Caco-2 (cell line): ENCODE measurements at regions of chr6 and their contacts with region 1.

Region 1: DNA sequence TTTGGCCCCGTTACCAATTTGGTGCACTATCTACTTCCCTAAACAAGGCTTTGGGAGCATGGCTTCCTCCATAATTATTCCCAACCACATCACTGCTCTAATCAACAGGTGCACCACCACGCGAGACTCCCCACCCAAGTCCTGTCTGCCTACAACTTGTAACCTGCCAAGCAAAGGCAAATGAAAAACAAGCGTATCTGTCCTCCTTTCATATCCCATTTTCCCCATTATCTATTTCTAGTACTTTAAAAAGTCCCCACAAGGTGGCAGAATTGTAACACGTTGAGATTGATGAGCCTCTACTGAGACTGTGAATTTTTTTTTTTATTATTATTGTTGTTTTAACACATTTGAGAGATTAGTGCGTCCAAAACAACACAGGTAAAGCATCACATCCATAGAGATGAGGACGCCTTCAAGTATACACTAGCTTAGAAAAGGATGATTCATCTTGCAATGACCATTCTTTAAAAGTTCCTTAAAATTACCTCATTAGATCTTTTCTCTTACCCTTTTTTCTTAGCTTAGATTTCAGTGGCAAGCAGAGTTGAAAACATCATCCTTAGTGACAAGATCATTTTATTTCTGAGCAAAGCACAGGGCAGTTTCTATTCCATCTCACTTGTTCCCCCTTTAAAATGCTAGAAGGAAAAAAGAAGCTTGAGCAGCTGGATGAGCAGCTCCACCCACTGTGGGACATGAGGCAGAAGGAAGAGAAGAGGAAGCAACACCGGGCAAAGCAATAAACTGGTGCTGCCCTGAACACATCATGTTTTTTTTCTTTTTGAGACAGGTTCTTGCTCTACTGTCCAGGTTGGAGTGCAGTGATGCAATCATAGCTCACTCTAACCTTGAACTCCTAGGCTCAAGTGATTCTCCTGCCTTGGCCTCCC is 210.8 kb downstream of the ARHGAP18 start:
- DNase-seq: peak in 1 of 2 experiments; percentile 68
- H3K4me3 ChIP-seq: no peak overlapping the region
- H3K4me3 Mint-ChIP-seq: no peak overlapping the region
- H3K27ac Mint-ChIP-seq: no peak overlapping the region
- H3K4me1 ChIP-seq: peaks cover 42% of the 10 kb centered on the region
- H3K4me1 Mint-ChIP-seq: peaks cover 24% of the 10 kb centered on the region
- H3K27me3 ChIP-seq: no peaks in the 10 kb centered on the region
- H3K27me3 Mint-ChIP-seq: no peaks in the 10 kb centered on the region
- CTCF ChIP-seq: peak; percentile 39 to 65

Region 2: DNA sequence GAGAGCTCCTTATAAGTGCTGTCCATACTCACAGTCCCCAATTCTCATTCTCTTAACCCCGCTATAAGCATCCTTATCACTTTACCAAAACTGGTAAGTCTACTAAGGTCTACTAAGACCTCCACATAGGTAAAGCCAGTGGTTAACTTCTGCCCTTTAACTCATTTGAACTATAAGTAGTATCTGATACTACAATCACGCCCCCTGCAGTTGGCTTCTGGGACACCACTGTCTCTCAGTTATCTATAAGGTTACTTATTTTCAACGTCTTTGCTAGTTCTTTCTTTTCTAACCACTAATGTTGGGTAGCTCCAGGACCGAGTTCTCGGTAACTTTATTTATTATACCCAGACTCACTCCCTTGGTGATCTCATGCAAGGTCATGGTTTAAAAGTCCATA is 68.2 kb after region 1 on chr6:
- CTCF ChIA-PET with region 1: interaction called, 13 read pairs
- POLR2A ChIA-PET with region 1: no interaction called
- intact Hi-C with region 1: loop called (anchors 1 kb)
- DNase-seq: peak in 1 of 2 experiments; percentile 21
- H3K4me3 ChIP-seq: no peak overlapping the region
- H3K4me3 Mint-ChIP-seq: no peak overlapping the region
- H3K27ac Mint-ChIP-seq: no peak overlapping the region
- H3K4me1 ChIP-seq: peaks cover 31% of the 10 kb centered on the region
- H3K4me1 Mint-ChIP-seq: peaks cover 27% of the 10 kb centered on the region
- H3K27me3 ChIP-seq: no peaks in the 10 kb centered on the region
- H3K27me3 Mint-ChIP-seq: no peaks in the 10 kb centered on the region
- CTCF ChIP-seq: peak in 1 of 2 experiments; percentile 32

Region 3: DNA sequence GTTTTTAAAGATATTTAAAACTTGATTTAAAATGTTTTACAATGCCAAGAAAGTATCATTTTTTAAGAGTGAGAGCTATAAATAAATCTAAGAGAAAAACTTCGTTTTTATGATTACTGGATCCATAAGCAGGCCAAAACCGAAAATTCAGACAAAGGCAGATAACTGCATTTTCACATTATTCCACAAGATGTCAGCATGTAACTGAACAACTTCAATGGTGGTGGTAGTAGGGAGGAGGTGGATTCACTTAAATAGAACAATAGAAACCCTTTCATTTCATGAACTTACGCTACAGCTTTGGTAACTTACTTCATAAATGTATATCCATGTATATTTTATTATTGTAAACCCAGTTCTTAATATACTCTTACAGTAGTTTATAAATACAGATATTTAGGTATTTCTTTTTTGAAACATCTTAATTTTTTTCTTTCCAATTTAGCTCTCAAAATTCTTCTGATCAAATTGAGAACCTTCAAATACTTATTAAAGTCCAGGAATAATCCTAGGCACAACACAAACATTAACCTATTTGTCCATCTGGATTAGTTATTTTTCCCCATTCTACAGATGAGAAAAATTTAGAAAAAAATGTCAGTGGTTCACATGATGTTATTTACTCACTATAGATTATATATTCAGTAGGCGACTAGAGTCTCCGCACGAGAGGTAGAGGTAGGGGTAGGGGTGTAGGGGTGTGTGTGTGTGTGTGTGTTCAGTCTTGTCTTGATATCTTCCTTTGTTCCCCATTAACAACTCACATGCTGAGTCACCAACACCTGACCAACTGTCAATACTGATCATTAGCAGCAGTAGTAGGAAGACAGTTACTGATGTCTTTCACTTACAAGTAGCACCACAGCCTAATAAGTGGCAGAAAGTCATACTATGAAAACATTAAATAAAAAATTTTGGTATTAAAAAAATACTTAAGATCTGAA is 99.3 kb after region 1 on chr6:
- CTCF ChIA-PET with region 1: interaction called, 4 read pairs
- POLR2A ChIA-PET with region 1: no interaction called
- intact Hi-C with region 1: loop called (anchors 1 kb)
- DNase-seq: peak in 1 of 2 experiments; percentile 60
- H3K4me3 ChIP-seq: no peak overlapping the region
- H3K4me3 Mint-ChIP-seq: no peak overlapping the region
- H3K27ac Mint-ChIP-seq: no peak overlapping the region
- H3K4me1 ChIP-seq: peaks cover 6% of the 10 kb centered on the region
- H3K4me1 Mint-ChIP-seq: no peaks in the 10 kb centered on the region
- H3K27me3 ChIP-seq: no peaks in the 10 kb centered on the region
- H3K27me3 Mint-ChIP-seq: no peaks in the 10 kb centered on the region
- CTCF ChIP-seq: peak; percentile 61

Region 4: DNA sequence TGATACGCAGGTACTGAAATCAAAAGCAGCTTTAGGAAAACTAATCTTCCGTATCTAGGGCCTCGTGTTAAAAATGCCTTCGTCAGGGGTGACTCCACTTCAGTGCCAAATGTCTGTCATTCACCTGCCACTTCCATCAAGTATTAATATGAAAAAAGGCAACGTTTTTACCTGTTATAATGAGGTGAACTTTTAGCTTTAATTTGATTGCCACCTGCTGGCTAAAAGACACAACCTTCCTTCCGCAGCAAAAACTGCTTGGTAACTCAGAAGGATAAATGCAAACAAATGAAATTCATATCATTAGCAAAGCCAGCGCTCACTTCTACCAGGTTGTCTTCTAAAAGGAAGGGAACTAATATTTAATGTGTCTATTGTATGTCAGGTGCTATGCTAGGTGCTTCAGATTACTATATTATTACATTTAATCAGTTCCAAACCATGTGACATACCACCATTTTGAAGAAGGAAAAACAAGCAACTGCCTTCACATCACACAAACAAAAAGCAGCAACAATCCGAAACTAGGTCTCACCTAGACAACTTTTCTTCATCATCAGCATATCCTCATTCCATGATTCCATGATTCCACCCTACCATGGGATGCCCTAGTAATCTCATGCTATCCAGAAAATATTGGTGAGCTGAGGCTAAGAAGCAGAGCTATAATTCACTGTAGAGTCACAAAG is 231.4 kb after region 1 on chr6:
- CTCF ChIA-PET with region 1: interaction called, 10 read pairs
- POLR2A ChIA-PET with region 1: no interaction called
- intact Hi-C with region 1: loop called (anchors 1 kb)
- DNase-seq: peak in 1 of 2 experiments; percentile 44
- H3K4me3 ChIP-seq: no peak overlapping the region
- H3K4me3 Mint-ChIP-seq: peak overlapping the region; percentile 24
- H3K27ac Mint-ChIP-seq: peak overlapping the region; percentile 14
- H3K4me1 ChIP-seq: peaks cover 24% of the 10 kb centered on the region
- H3K4me1 Mint-ChIP-seq: peaks cover 25% of the 10 kb centered on the region
- H3K27me3 ChIP-seq: no peaks in the 10 kb centered on the region
- H3K27me3 Mint-ChIP-seq: no peaks in the 10 kb centered on the region
- CTCF ChIP-seq: peak; percentile 65 to 71

Region 5: GRCh38 chr6:130020907-130021629 is 521.9 kb after region 1 on chr6:
- CTCF ChIA-PET with region 1: no interaction called
- POLR2A ChIA-PET with region 1: no interaction called
- intact Hi-C with region 1: loop called (anchors 10 kb)
- DNase-seq: peak; percentile 77 to 82
- H3K4me3 ChIP-seq: peak overlapping the region; percentile 80
- H3K4me3 Mint-ChIP-seq: peak overlapping the region; percentile 83
- H3K27ac Mint-ChIP-seq: peak overlapping the region; percentile 50
- H3K4me1 ChIP-seq: peaks cover 8% of the 10 kb centered on the region; the same call in 1 of the 2 replicates
- H3K4me1 Mint-ChIP-seq: no peaks in the 10 kb centered on the region
- H3K27me3 ChIP-seq: no peaks in the 10 kb centered on the region
- H3K27me3 Mint-ChIP-seq: no peaks in the 10 kb centered on the region
- CTCF ChIP-seq: peak; percentile 73 to 76